MCF 10A (cell line): ENCODE measurements at regions of chr2 and their contacts with region 1.

Region 1: GRCh38 chr2:67463810-67464209 is 66.7 kb downstream of the ETAA1 start:
- DNase-seq: peak; percentile 97
- H3K4me3 Mint-ChIP-seq: peak overlapping the region; percentile 28
- H3K27ac Mint-ChIP-seq: peak overlapping the region; percentile 92
- H3K4me1 Mint-ChIP-seq: peaks cover 37% of the 10 kb centered on the region
- H3K27me3 Mint-ChIP-seq: no peaks in the 10 kb centered on the region
- CTCF ChIP-seq: no peak

Region 2: DNA sequence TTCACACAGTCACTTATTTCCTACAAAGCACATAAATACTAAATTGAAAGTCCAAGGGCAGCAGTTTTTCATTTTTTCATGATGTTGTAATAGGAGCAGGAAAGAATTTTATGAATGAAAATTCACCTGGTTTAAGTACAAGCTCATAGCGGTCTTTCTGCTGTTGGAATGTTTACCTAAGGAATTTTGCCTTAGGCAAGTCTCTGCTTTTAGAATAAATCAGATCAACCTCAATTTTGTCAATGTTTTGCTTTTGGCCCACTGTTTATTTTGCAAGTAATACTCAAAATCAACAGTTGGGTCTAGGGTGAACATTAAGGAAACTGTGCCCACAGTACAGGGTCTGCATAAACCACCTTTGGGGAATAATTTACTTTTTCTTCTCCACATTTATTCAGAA is 26.6 kb before region 1 on chr2:
- CTCF ChIA-PET with region 1: no interaction called
- POLR2A ChIA-PET with region 1: interaction called, 12 read pairs
- intact Hi-C with region 1: no loop called
- DNase-seq: peak; percentile 48
- H3K4me3 Mint-ChIP-seq: no peak overlapping the region
- H3K27ac Mint-ChIP-seq: peak overlapping the region; percentile 57
- H3K4me1 Mint-ChIP-seq: peaks cover 31% of the 10 kb centered on the region
- H3K27me3 Mint-ChIP-seq: no peaks in the 10 kb centered on the region
- CTCF ChIP-seq: no peak

Region 3: DNA sequence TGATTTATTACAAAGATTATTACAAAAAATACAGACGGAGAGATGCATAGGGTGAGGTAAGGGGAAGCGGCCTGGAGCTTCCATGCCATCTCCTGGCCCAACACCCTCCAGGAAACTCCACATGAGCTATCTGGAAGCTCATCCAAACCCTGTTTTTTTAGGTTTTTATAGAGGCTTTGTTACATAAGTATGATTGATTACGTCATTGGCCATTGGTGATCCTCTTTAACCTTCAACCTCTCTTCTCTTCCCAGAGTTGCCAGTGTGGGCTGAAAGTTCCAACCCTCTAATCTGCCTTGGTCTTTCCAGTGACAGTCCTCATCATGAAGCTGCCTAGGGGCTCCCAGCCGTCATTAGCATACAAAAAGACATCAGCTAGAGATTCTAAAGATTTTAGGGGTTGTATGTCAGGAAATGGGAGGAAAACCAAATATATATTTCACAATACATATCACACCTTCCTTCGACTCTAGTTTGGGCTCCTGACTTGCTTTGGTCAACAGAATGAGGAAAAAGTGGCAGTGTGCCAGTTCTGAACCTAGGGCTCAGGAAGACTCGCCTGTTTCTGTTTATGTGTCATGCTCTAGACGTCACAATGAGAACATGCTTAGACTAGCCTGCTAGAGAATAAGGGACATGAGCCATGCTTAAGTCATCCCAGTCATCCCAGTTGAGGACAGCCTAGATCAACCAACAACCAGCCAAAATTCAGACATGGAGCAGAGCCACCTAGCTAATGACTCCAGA is 12.6 kb before region 1 on chr2:
- CTCF ChIA-PET with region 1: no interaction called
- POLR2A ChIA-PET with region 1: interaction called, 77 read pairs
- intact Hi-C with region 1: no loop called
- DNase-seq: peak; percentile 99
- H3K4me3 Mint-ChIP-seq: no peak overlapping the region
- H3K27ac Mint-ChIP-seq: peak overlapping the region; percentile 84
- H3K4me1 Mint-ChIP-seq: peaks cover 41% of the 10 kb centered on the region
- H3K27me3 Mint-ChIP-seq: no peaks in the 10 kb centered on the region
- CTCF ChIP-seq: no peak

Region 4: GRCh38 chr2:67600222-67600871 is 136.5 kb after region 1 on chr2:
- CTCF ChIA-PET with region 1: no interaction called
- POLR2A ChIA-PET with region 1: no interaction called
- intact Hi-C with region 1: no loop called
- DNase-seq: peak; percentile 9
- H3K4me3 Mint-ChIP-seq: no peak overlapping the region
- H3K27ac Mint-ChIP-seq: peak overlapping the region; percentile 73
- H3K4me1 Mint-ChIP-seq: peaks cover 24% of the 10 kb centered on the region
- H3K27me3 Mint-ChIP-seq: no peaks in the 10 kb centered on the region
- CTCF ChIP-seq: no peak

Region 5: GRCh38 chr2:67719351-67719750 is 255.5 kb after region 1 on chr2:
- CTCF ChIA-PET with region 1: no interaction called
- POLR2A ChIA-PET with region 1: no interaction called
- intact Hi-C with region 1: no loop called
- DNase-seq: peak; percentile 9
- H3K4me3 Mint-ChIP-seq: no peak overlapping the region
- H3K27ac Mint-ChIP-seq: no peak overlapping the region
- H3K4me1 Mint-ChIP-seq: no peaks in the 10 kb centered on the region
- H3K27me3 Mint-ChIP-seq: no peaks in the 10 kb centered on the region
- CTCF ChIP-seq: no peak

Region 6: GRCh38 chr2:68196120-68196716 is 732.4 kb after region 1 on chr2:
- CTCF ChIA-PET with region 1: no interaction called
- POLR2A ChIA-PET with region 1: no interaction called
- intact Hi-C with region 1: no loop called
- DNase-seq: no peak
- H3K4me3 Mint-ChIP-seq: no peak overlapping the region
- H3K27ac Mint-ChIP-seq: peak overlapping the region; percentile 86
- H3K4me1 Mint-ChIP-seq: peaks cover 35% of the 10 kb centered on the region
- H3K27me3 Mint-ChIP-seq: no peaks in the 10 kb centered on the region
- CTCF ChIP-seq: no peak